CD8-positive, alpha-beta T cell (primary cell): ENCODE measurements at regions of chr9 and their contacts with region 1.

Region 1: DNA sequence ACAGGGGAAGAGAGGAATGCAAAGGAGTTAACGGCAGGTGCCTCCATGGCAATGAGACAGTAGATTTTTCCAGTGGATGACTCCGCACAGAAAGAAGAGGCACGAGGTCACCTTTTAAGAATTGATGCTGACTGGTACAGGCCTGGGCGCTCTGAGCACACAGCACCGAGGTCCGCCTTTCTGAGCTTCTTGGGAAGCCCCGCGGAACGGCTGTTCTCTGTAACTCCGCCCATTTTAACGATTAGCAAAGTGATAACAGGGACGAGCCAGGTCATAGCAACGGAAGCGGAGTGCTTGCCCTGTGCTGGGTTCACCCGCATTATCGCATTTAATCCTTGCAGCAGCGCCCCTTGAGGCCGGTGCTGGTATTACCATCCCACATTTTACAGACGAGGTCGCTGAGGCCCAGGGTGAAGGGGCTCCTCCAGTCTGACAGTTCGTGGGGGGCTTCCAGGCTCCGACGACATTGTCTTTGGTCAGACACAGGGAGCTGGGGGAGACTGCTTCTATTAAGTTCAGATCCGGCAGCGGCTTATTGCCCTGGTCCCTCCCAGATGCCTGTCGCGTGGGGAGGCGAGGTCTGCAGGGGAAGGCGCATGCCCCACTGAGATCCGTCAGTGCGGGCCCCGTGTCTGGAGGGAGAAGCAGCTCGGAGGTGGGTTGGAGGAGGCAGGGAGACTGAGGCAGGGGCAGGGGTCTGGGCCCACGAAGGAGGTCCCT is 22.4 kb upstream of the HMCN2 start:
- DNase-seq: peak; percentile 61 to 88 (median 83)
- ATAC-seq: peak; percentile 92
- H3K4me3 ChIP-seq: peak overlapping the region in 1 of 2 experiments; percentile 24
- H3K4me3 Mint-ChIP-seq: peak overlapping the region; percentile 67
- H3K27ac ChIP-seq: no peak overlapping the region
- H3K27ac Mint-ChIP-seq: no peak overlapping the region
- H3K4me1 ChIP-seq: peaks cover 5% of the 10 kb centered on the region
- H3K4me1 Mint-ChIP-seq: peaks cover 17% of the 10 kb centered on the region
- H3K27me3 ChIP-seq: no peaks in the 10 kb centered on the region
- H3K27me3 Mint-ChIP-seq: no peaks in the 10 kb centered on the region
- CTCF ChIP-seq: peak; percentile 92

Region 2: DNA sequence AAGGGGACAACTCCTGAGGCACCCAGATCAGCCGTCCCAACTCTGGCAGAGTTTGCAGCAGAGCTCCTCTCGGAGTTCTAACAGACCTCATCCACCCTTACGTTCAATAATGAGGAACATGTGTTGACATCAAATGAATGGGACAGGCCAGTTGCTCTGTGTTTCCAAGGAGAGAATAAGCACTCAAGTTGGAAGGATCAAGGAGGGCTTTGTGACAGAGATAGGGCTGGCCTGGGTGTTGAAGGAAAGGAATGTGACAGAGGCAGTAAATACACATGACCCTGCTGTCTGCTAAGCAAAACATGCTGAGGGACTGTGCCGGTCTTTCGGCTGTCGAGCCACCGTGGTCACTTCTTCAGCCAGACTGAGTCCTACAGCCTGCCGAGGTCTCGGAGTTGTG is 141.3 kb before region 1 on chr9:
- CTCF ChIA-PET with region 1: interaction called, 232 read pairs
- POLR2A ChIA-PET with region 1: no interaction called
- intact Hi-C with region 1: loop called in 1 of 2 experiments (anchors 1 kb)
- DNase-seq: no peak
- ATAC-seq: no peak
- H3K4me3 ChIP-seq: no peak overlapping the region
- H3K4me3 Mint-ChIP-seq: no peak overlapping the region
- H3K27ac ChIP-seq: no peak overlapping the region
- H3K27ac Mint-ChIP-seq: no peak overlapping the region
- H3K4me1 ChIP-seq: no peaks in the 10 kb centered on the region
- H3K4me1 Mint-ChIP-seq: peaks cover 3% of the 10 kb centered on the region
- H3K27me3 ChIP-seq: no peaks in the 10 kb centered on the region
- H3K27me3 Mint-ChIP-seq: no peaks in the 10 kb centered on the region
- CTCF ChIP-seq: no peak

Region 3: GRCh38 chr9:130311003-130311402 is 67.8 kb after region 1 on chr9:
- CTCF ChIA-PET with region 1: no interaction called
- POLR2A ChIA-PET with region 1: no interaction called
- intact Hi-C with region 1: no loop called
- DNase-seq: no peak
- ATAC-seq: no peak
- H3K4me3 ChIP-seq: no peak overlapping the region
- H3K4me3 Mint-ChIP-seq: no peak overlapping the region
- H3K27ac ChIP-seq: no peak overlapping the region
- H3K27ac Mint-ChIP-seq: no peak overlapping the region
- H3K4me1 ChIP-seq: no peaks in the 10 kb centered on the region
- H3K4me1 Mint-ChIP-seq: no peaks in the 10 kb centered on the region
- H3K27me3 ChIP-seq: no peaks in the 10 kb centered on the region
- H3K27me3 Mint-ChIP-seq: peaks cover 3% of the 10 kb centered on the region
- CTCF ChIP-seq: no peak

Region 4: DNA sequence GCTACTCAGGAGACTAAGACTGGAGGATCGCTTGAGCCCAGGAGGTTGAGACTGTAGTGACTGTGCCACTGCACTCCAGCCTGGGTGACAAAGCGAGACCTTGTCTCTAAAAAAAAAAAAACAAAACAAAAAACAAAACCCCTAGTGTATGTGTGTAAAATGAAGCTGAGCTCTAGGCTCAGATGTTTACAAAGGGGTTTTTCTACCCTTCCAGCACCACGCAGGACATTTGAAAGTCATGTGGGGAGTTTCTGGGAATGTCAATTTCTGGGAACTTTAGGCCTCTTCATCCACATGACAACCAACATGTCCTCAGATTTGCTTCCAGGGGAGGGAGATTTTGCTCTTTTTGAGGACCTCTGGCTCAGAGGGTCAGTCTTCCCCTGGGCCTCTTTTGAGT is 810.7 kb after region 1 on chr9:
- CTCF ChIA-PET with region 1: no interaction called
- POLR2A ChIA-PET with region 1: no interaction called
- intact Hi-C with region 1: no loop called
- DNase-seq: no peak
- ATAC-seq: no peak
- H3K4me3 ChIP-seq: no peak overlapping the region
- H3K4me3 Mint-ChIP-seq: no peak overlapping the region
- H3K27ac ChIP-seq: no peak overlapping the region
- H3K27ac Mint-ChIP-seq: no peak overlapping the region
- H3K4me1 ChIP-seq: no peaks in the 10 kb centered on the region
- H3K4me1 Mint-ChIP-seq: no peaks in the 10 kb centered on the region
- H3K27me3 ChIP-seq: peaks cover 0 to 3% of the 10 kb centered on the region in 2 experiments
- H3K27me3 Mint-ChIP-seq: peaks cover 2% of the 10 kb centered on the region
- CTCF ChIP-seq: no peak